ENCODE measurements at regions of chr22 and their contacts with region 1.

Region 1: GRCh38 chr22:33018232-33018864 is 39.8 kb downstream of the SYN3 start:
- DNase-seq: peak in 8 of 10 donors; percentile 46 to 92 (median 70)

Region 2: GRCh38 chr22:32764330-32765131 is 253.8 kb before region 1 on chr22:
- intact Hi-C with region 1: no loop called
- DNase-seq: peak in 1 of 10 donors; percentile 69

Region 3: GRCh38 chr22:33049119-33049729 is 30.9 kb after region 1 on chr22:
- intact Hi-C with region 1: loop called (anchors 1 kb)
- DNase-seq: peak; percentile 64 to 95 (median 78)

Region 4: GRCh38 chr22:33202455-33202854 is 184.1 kb after region 1 on chr22:
- intact Hi-C with region 1: loop called (anchors 5 kb)
- DNase-seq: no peak

Measured in posterior cingulate gyrus (tissue), 11 donors.